Left ventricle myocardium superior (tissue), 1 donor: ENCODE measurements at regions of chr3 and their contacts with region 1.

Region 1: DNA sequence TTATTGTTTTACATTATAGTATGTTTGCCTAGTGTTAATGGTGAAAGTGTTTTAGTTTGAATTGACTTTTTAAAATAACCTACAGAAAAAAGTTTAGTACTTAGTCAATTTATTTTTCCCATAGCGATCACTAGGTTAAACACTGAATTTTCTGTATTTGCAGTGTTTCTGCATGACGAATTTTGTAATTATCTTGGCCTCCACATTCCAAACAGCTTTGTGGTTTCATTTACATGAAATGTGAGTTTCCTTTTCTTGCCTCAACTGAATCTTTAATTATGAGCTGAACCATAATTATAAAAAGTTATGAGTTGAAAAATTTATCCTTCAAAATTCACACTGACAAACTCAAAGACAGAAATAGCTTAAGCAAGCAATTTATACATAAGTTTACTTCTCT is 235.5 kb downstream of the CTNNB1 start:
- DNase-seq: no peak
- ATAC-seq: no peak

Region 2: GRCh38 chr3:40631351-40631995 is 803.3 kb before region 1 on chr3:
- intact Hi-C with region 1: loop called (anchors 5 kb)
- DNase-seq: no peak
- ATAC-seq: no peak

Region 3: GRCh38 chr3:41224120-41224806 is 210.5 kb before region 1 on chr3:
- intact Hi-C with region 1: no loop called
- DNase-seq: no peak
- ATAC-seq: peak; percentile 95

Region 4: DNA sequence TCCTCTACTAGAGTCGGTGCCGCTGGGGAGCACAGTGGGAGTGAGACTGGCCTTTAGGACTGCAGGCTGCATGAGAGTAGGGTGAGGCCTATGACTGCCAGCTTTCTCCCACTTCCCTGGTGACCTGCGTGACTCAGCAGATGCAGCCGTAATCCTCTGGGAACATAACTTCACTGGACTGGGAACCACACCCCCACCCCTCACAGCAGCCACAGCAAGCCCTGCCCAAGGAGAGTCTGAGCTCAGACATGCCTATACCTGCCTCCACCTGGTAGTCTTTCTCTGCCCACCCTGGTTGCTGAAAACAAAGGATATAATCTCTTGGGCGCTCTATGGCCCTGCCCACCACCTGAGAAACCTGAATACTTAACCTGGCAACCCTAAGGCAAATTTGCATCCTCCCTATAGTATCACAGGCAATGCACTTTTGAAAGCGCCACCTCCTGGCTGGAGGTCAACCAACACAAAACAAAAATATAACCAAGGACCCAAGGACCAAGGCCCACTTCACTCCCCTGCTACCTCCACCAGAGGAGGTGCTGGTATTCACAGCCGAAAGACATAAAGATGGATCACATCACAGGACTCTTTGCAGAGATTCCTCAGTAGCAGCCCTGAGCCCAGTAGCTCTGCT is 73.4 kb after region 1 on chr3:
- intact Hi-C with region 1: no loop called
- DNase-seq: no peak
- ATAC-seq: no peak